Activated CD8-positive, alpha-beta T cell treated with anti-CD3 and anti-CD28 coated beads for 36 hours (primary cell): ENCODE measurements at regions of chr4 and their contacts with region 1.

Region 1: GRCh38 chr4:15396157-15396800 is 31.6 kb upstream of the C1QTNF7 start:
- DNase-seq: peak; percentile 78
- ATAC-seq: peak; percentile 83
- H3K4me3 Mint-ChIP-seq: no peak overlapping the region
- H3K27ac Mint-ChIP-seq: no peak overlapping the region
- H3K4me1 Mint-ChIP-seq: peaks cover 21% of the 10 kb centered on the region
- H3K27me3 Mint-ChIP-seq: no peaks in the 10 kb centered on the region
- CTCF ChIP-seq: peak; percentile 87

Region 2: GRCh38 chr4:15164571-15164970 is 231.7 kb before region 1 on chr4:
- CTCF ChIA-PET with region 1: no interaction called
- POLR2A ChIA-PET with region 1: no interaction called
- intact Hi-C with region 1: no loop called
- DNase-seq: no peak
- ATAC-seq: no peak
- H3K4me3 Mint-ChIP-seq: no peak overlapping the region
- H3K27ac Mint-ChIP-seq: no peak overlapping the region
- H3K4me1 Mint-ChIP-seq: no peaks in the 10 kb centered on the region
- H3K27me3 Mint-ChIP-seq: peaks cover 6% of the 10 kb centered on the region
- CTCF ChIP-seq: no peak

Region 3: DNA sequence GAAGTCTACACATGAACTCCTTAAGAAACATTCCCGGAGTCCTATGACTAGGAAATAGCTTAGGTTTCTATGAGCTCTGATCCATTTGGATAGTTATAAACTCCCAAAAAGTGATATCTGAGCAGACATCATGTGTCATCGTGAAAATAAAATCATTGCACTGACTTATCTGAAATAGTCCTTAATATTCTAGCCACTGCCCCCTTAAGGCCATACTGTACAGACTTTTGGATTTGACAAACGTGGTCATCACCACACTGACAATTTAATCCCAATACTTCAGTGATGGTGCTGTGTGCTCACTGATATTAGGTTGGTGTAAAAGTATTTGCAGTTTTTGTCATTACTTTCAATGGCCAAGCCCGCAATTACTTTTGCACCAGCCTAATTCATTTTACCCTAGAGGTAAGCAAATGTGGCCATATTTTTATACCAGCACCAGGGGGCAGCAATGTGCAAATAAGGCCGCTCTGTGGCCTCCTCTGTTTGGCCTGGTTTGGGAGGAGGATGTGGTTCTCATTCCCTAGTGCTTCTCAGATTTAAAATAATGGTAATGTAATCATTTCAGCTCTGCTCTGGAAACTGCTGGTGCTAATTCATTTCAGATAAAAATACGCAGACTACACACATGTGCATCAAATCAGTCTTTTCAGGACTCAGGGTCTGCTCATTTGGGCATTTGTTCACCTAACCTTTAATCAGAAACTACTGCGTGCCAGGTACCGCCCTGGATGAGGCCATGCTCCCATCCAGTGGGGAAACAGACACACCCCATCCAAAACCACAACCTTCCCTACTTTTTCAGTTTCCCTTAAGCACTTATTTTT is 164.8 kb before region 1 on chr4:
- CTCF ChIA-PET with region 1: interaction called, 36 read pairs
- POLR2A ChIA-PET with region 1: no interaction called
- intact Hi-C with region 1: no loop called
- DNase-seq: peak; percentile 87
- ATAC-seq: peak; percentile 69
- H3K4me3 Mint-ChIP-seq: no peak overlapping the region
- H3K27ac Mint-ChIP-seq: no peak overlapping the region
- H3K4me1 Mint-ChIP-seq: peaks cover 33% of the 10 kb centered on the region
- H3K27me3 Mint-ChIP-seq: no peaks in the 10 kb centered on the region
- CTCF ChIP-seq: peak; percentile 90

Region 4: DNA sequence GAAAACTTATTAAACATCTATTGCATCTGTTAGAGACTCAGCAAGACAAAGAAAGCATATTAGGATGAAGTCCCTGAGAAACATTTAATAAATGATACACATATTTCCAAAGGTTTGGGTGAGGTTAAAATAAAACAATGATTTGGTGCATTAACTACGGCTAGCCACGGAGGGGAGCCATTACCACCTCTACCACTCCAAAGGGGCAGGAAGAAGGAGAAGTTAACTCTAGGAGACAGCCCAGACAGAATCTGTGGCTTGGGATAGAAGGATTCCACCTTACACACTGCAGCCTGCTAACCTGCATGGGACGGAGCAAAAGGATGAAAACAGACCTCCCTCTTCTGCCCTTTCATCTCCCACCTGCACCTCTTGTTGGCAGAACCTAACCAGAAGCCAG is 157.6 kb before region 1 on chr4:
- CTCF ChIA-PET with region 1: interaction called, 36 read pairs
- POLR2A ChIA-PET with region 1: no interaction called
- intact Hi-C with region 1: loop called (anchors 1 kb)
- DNase-seq: peak; percentile 43
- ATAC-seq: peak; percentile 73
- H3K4me3 Mint-ChIP-seq: no peak overlapping the region
- H3K27ac Mint-ChIP-seq: no peak overlapping the region
- H3K4me1 Mint-ChIP-seq: peaks cover 14% of the 10 kb centered on the region
- H3K27me3 Mint-ChIP-seq: no peaks in the 10 kb centered on the region
- CTCF ChIP-seq: peak; percentile 83

Region 5: DNA sequence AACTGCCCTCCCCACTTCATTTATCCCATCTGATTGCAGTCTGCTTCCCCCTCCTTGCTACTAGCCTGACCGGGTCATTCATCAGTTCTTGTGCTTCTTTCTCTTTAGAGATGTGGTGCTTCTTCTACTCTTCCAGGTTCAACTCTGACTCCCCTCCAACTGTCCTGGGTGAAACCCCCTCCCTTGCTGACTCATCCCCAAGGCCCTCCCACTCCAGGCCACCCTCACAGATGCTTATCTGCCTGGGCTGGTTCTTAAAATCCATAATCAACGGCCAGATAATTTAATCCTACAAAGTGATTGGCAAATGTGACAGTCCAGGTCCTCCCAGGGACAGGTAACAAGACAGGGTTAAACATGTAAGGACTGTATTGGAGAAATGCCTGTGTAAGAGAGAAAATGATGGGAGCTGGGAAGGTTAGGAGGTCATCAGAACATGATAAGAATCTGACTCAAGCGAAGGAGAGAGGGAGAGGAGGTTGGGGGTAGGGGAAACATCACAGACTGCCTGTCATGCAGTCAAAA is 151.2 kb before region 1 on chr4:
- CTCF ChIA-PET with region 1: interaction called, 14 read pairs
- POLR2A ChIA-PET with region 1: no interaction called
- intact Hi-C with region 1: no loop called
- DNase-seq: no peak
- ATAC-seq: no peak
- H3K4me3 Mint-ChIP-seq: no peak overlapping the region
- H3K27ac Mint-ChIP-seq: no peak overlapping the region
- H3K4me1 Mint-ChIP-seq: no peaks in the 10 kb centered on the region
- H3K27me3 Mint-ChIP-seq: no peaks in the 10 kb centered on the region
- CTCF ChIP-seq: no peak

Region 6: GRCh38 chr4:15385928-15386327 is 10.4 kb before region 1 on chr4:
- CTCF ChIA-PET with region 1: interaction called, 23 read pairs
- POLR2A ChIA-PET with region 1: no interaction called
- intact Hi-C with region 1: no loop called
- DNase-seq: no peak
- ATAC-seq: no peak
- H3K4me3 Mint-ChIP-seq: no peak overlapping the region
- H3K27ac Mint-ChIP-seq: no peak overlapping the region
- H3K4me1 Mint-ChIP-seq: no peaks in the 10 kb centered on the region
- H3K27me3 Mint-ChIP-seq: no peaks in the 10 kb centered on the region
- CTCF ChIP-seq: no peak

Region 7: DNA sequence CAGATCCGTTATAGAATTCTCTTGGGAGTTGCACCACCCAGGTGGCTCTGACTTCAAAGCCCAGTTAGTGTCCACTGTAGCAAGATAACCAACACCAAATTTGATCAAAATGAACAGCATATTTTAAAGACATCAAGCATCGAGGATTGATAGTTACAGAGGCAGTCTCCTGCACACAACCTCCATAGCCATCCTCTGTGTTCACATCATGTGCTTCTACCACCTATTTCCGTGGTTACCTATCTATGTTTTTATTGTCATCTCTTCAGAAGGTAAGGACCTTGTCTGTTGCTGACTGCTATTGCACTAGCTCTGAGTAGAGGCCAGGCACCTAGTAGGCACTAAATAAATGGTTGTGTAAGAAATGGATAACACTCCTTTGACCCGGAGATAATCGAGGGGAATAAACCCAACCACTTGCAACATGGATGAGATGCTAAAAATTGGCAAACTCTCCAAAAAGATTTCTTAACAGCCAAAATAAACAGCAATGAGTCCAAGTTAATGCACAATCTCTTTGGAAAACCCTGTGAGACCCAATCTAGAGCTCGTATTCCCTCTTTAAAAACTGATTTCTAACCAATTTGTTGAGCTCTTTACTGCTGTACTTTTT is 16.8 kb after region 1 on chr4:
- CTCF ChIA-PET with region 1: interaction called, 10 read pairs
- POLR2A ChIA-PET with region 1: interaction called, 3 read pairs
- intact Hi-C with region 1: no loop called
- DNase-seq: no peak
- ATAC-seq: peak; percentile 29
- H3K4me3 Mint-ChIP-seq: no peak overlapping the region
- H3K27ac Mint-ChIP-seq: no peak overlapping the region
- H3K4me1 Mint-ChIP-seq: peaks cover 41% of the 10 kb centered on the region
- H3K27me3 Mint-ChIP-seq: no peaks in the 10 kb centered on the region
- CTCF ChIP-seq: no peak

Region 8: GRCh38 chr4:15469402-15470127 is 73.3 kb after region 1 on chr4 and contains the start of gene CC2D2A:
- CTCF ChIA-PET with region 1: interaction called, 10 read pairs
- POLR2A ChIA-PET with region 1: no interaction called
- intact Hi-C with region 1: no loop called
- DNase-seq: no peak
- ATAC-seq: peak; percentile 30
- H3K4me3 Mint-ChIP-seq: peak within 1 kb of the TSS; percentile 8
- H3K27ac Mint-ChIP-seq: no peak within 1 kb of the TSS
- H3K4me1 Mint-ChIP-seq: peaks cover 11% of the 10 kb centered on the region
- H3K27me3 Mint-ChIP-seq: no peaks in the 10 kb centered on the region
- CTCF ChIP-seq: no peak
- total RNA-seq, gene CC2D2A: not detected